Sciatic nerve (tissue), 2 donors: ENCODE measurements at regions of chr10 and their contacts with region 1.

Region 1: DNA sequence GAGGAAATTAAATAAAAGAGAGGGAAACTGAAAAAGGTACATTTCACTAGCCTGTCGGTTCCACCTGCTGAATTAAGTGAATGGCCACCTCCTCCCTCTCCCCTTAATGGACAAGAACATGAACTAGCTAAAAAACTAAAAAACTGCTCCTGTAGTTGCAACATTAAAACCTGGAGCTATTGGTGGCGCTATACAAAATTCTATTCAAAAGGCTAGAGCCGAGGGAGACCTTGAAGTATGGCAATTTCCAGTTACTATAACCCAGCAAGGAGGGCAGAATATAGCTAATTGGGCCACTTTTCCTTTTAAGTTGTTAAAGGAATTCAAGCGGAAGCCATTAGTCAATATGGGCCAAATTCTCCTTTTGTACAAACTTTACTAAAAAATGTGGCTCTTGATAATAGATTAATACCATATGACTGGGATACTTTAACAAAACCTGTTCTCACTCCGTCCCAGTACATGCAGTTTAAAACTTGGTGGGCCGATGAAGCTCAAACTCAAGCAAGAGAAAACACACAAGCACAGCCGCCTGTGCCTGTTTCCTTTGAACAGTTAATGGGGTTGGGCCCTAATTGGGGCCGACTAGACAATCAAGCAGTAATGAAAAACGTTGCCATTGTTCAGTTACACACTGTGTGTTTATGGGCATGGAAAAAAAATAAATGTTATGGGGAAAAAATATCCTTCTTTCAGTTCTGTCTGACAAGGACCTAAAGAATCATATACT is 6.5 kb upstream of the CHST3 start:
- DNase-seq: no peak
- ATAC-seq: no peak

Region 2: GRCh38 chr10:72048450-72049124 is 90.9 kb after region 1 on chr10:
- intact Hi-C with region 1: loop called (anchors 5 kb)
- DNase-seq: peak; percentile 98
- ATAC-seq: peak; percentile 90

Region 3: DNA sequence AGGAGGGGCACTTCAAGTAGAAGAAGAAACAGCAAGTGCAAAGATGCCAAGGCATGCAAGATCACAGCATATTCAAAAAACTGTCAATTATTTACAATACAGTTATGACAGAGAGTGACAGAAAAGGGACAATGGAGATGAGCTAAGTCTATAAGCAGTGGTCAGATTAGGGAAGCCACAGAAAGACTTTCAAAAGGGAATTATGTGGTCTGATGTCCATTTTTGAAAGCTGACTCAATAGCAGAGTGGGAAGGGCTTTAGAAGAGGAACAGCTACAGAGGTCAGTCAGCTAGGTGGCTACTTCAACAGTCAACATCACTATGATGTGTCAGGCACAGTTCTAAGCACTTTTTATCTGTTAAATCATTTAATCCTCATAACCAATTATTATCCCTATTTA is 175.8 kb after region 1 on chr10:
- intact Hi-C with region 1: no loop called
- DNase-seq: no peak
- ATAC-seq: peak; percentile 49